ENCODE measurements at regions of chr4 and their contacts with region 1.

Region 1: DNA sequence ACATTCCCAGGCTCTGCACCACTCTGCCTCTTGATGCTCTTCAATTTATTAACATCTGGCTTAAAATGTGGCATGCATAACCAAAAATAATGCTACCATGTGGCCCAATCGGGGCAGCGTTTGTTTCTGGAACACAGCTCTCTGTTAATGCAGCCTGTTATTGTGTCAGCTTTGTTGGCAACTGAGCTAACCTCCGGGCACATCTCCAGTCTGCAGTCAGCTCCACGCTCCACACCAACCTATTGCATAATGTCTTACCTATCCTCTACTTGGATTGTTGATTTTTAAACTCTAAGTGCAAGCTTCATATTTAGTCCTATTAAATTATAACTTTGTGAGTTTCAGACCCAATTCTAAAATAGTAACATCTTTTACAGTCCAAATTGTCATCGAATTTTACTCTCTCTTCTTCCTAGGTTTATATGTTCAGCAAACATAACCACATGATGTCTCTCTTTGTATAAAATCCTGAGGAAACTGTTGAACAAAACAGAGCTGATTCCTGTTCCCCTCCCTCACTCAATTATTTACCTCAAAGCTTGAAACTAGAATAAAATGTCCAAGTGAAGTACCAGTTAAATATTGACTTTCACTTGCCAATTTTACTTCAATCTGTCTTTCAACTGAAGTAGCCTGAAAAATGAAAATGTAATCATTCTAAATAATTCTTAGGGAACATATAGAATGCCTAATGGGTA is 92.2 kb upstream of the RAPGEF2 start:
- DNase-seq: peak; percentile 75
- H3K4me3 ChIP-seq: no peak overlapping the region
- H3K27ac ChIP-seq: peak overlapping the region; percentile 44
- H3K4me1 ChIP-seq: peaks cover 31% of the 10 kb centered on the region
- H3K27me3 ChIP-seq: no peaks in the 10 kb centered on the region
- CTCF ChIP-seq: no peak

Region 2: GRCh38 chr4:158873795-158874401 is 136.8 kb before region 1 on chr4:
- CTCF ChIA-PET with region 1: no interaction called
- dilution Hi-C with region 1: no loop called
- in situ Hi-C with region 1: no loop called
- intact Hi-C with region 1: loop called (anchors 5 kb)
- DNase-seq: peak; percentile 87
- H3K4me3 ChIP-seq: no peak overlapping the region
- H3K27ac ChIP-seq: no peak overlapping the region
- H3K4me1 ChIP-seq: peaks cover 18% of the 10 kb centered on the region
- H3K27me3 ChIP-seq: no peaks in the 10 kb centered on the region
- CTCF ChIP-seq: no peak

Region 3: DNA sequence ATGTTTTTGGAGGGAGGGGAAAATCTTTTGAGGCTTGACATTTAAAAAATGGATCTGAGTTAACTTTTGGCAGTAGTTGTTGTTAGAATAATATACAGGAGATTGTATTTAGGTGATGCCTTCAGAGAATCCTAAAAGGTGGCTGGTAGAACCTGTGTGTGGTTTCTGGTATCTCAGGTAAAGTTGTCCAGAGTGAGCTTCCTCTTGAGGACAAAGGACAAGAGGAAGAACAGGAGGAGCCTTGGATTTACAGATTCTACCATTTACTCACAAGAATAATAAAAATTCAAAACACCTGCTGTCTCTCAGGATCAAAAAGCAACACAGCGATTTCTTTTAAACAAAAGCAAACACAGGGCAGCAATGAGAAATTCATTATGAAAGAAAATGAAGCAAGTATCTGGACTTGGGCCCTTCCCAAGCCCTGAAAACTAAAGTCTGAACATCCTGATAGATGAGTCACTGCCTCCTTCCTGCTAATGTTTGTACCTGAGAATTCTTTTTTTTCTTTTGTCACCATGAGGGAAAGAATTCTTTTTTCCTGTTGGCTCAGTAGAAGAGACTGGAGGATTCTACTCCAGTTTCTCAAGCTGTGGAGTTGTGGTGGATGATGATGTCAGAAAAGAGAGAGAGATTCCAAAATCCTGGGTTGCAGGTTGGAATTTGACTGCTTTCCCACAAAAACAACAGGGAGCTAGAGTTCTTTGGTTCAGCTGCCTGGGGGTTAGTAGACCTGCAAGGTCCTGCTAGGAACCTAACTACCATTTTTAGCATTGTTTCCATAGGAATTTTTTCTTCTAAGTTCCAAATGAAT is 60.7 kb after region 1 on chr4:
- CTCF ChIA-PET with region 1: no interaction called
- dilution Hi-C with region 1: no loop called
- in situ Hi-C with region 1: no loop called
- intact Hi-C with region 1: loop called (anchors 5 kb)
- DNase-seq: peak; percentile 85
- H3K4me3 ChIP-seq: peak overlapping the region in 1 of 3 experiments; percentile 4
- H3K27ac ChIP-seq: peak overlapping the region; percentile 96
- H3K4me1 ChIP-seq: peaks cover 39% of the 10 kb centered on the region
- H3K27me3 ChIP-seq: no peaks in the 10 kb centered on the region
- CTCF ChIP-seq: no peak

Region 4: GRCh38 chr4:159097785-159098184 is 87.1 kb after region 1 on chr4:
- CTCF ChIA-PET with region 1: no interaction called
- dilution Hi-C with region 1: no loop called
- in situ Hi-C with region 1: loop called in 1 of 2 experiments (anchors 5 kb)
- intact Hi-C with region 1: no loop called
- DNase-seq: no peak
- H3K4me3 ChIP-seq: no peak overlapping the region
- H3K27ac ChIP-seq: no peak overlapping the region
- H3K4me1 ChIP-seq: peaks cover 6% of the 10 kb centered on the region
- H3K27me3 ChIP-seq: no peaks in the 10 kb centered on the region
- CTCF ChIP-seq: no peak

Measured in mammary epithelial cell (primary cell).